ENCODE measurements at regions of chr17 and their contacts with region 1.

Region 1: GRCh38 chr17:59786536-59787319 is 79.3 kb downstream of the VMP1 start:
- DNase-seq: peak; percentile 21 to 96 (median 70)
- ATAC-seq: peak; percentile 89
- H3K4me3 ChIP-seq: peak overlapping the region; percentile 20 to 35
- H3K4me3 Mint-ChIP-seq: peak overlapping the region; percentile 78
- H3K27ac ChIP-seq: peak overlapping the region; percentile 43 to 83
- H3K27ac Mint-ChIP-seq: peak overlapping the region; percentile 94
- H3K4me1 ChIP-seq: peaks cover 35% of the 10 kb centered on the region
- H3K4me1 Mint-ChIP-seq: peaks cover 39% of the 10 kb centered on the region
- H3K27me3 ChIP-seq: no peaks in the 10 kb centered on the region
- H3K27me3 Mint-ChIP-seq: no peaks in the 10 kb centered on the region
- CTCF ChIP-seq: no peak

Region 2: DNA sequence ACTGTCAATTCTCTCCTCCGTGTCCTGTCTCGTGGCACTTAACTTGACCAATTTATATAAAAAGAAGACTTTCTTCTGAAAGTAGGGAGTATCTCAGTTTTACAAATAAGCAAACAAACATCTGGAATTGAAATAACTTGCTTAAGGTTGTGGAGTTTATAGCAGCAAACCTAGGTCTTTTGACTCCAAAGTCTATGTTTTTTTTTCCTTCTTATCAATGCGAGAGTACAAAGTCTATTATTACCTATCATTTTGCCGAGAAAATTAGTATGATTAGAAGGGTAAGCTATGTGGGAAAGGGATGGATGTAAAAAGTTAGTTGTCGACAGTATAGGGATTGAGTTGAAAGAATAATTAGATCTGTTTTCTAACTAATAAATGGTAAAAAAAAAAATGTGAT is 980.7 kb before region 1 on chr17:
- CTCF ChIA-PET with region 1: no interaction called
- POLR2A ChIA-PET with region 1: no interaction called
- intact Hi-C with region 1: no loop called
- DNase-seq: no peak
- ATAC-seq: no peak
- H3K4me3 ChIP-seq: no peak overlapping the region
- H3K4me3 Mint-ChIP-seq: no peak overlapping the region
- H3K27ac ChIP-seq: no peak overlapping the region
- H3K27ac Mint-ChIP-seq: no peak overlapping the region
- H3K4me1 ChIP-seq: no peaks in the 10 kb centered on the region
- H3K4me1 Mint-ChIP-seq: no peaks in the 10 kb centered on the region
- H3K27me3 ChIP-seq: no peaks in the 10 kb centered on the region
- H3K27me3 Mint-ChIP-seq: peaks cover 55% of the 10 kb centered on the region
- CTCF ChIP-seq: no peak

Region 3: DNA sequence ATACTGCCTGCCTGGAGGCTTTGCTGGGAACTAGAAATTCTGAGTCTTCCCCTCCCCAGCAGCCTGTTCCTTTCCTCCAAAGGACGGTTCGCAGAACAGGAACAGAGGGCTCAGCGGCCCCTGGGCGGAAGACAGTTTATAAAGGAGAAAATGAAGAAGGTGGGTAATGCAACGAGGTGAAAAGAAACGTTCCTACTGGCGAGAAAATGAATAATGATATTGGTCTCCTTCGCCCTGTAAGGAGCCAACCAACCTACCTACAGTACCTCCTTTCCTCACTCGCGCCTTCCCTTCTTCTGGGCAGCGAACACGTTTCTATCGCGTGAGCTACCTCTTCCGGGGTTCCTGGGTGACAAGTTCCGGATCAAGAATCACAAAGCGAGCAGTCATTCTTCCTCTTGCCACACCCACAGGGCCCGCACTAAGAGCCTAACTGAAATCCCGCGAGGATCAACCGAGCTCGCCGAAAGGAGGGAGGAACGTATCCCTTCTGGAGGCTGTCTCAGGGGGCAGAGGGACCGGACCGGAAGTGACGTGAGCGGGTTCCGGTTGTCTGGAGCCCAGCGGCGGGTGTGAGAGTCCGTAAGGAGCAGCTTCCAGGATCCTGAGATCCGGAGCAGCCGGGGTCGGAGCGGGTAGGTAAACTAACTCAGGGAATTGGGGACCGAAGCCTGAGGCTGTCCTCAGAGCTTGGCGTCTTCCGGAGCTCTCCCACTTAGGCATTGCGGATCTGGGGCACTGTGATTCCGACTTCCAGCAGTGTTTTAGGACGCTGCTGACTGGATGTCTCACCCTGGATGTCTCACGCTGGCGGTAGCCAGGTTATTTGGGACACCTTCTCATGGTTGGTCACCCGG is 79.4 kb before region 1 on chr17 and contains the starts of genes PTRH2 and VMP1:
- CTCF ChIA-PET with region 1: no interaction called
- POLR2A ChIA-PET with region 1: no interaction called
- intact Hi-C with region 1: no loop called
- DNase-seq: peak; percentile 72 to 97 (median 87)
- ATAC-seq: peak; percentile 93
- H3K4me3 ChIP-seq: peak within 1 kb of the TSS; percentile 72 to 80
- H3K4me3 Mint-ChIP-seq: peak within 1 kb of the TSS; percentile 95
- H3K27ac ChIP-seq: peak within 1 kb of the TSS; percentile 80 to 94
- H3K27ac Mint-ChIP-seq: peak within 1 kb of the TSS; percentile 97
- H3K4me1 ChIP-seq: peaks cover 36% of the 10 kb centered on the region
- H3K4me1 Mint-ChIP-seq: peaks cover 63% of the 10 kb centered on the region
- H3K27me3 ChIP-seq: no peaks in the 10 kb centered on the region
- H3K27me3 Mint-ChIP-seq: no peaks in the 10 kb centered on the region
- CTCF ChIP-seq: no peak
- total RNA-seq, gene PTRH2: 6.1 to 7.6 TPM
- total RNA-seq, gene VMP1: 56.8 to 66.2 TPM

Region 4: GRCh38 chr17:59725691-59726090 is 61.0 kb before region 1 on chr17:
- CTCF ChIA-PET with region 1: no interaction called
- POLR2A ChIA-PET with region 1: no interaction called
- intact Hi-C with region 1: no loop called
- DNase-seq: no peak
- ATAC-seq: no peak
- H3K4me3 ChIP-seq: no peak overlapping the region
- H3K4me3 Mint-ChIP-seq: no peak overlapping the region
- H3K27ac ChIP-seq: no peak overlapping the region
- H3K27ac Mint-ChIP-seq: no peak overlapping the region
- H3K4me1 ChIP-seq: no peaks in the 10 kb centered on the region
- H3K4me1 Mint-ChIP-seq: peaks cover 33% of the 10 kb centered on the region
- H3K27me3 ChIP-seq: no peaks in the 10 kb centered on the region
- H3K27me3 Mint-ChIP-seq: no peaks in the 10 kb centered on the region
- CTCF ChIP-seq: no peak

Region 5: DNA sequence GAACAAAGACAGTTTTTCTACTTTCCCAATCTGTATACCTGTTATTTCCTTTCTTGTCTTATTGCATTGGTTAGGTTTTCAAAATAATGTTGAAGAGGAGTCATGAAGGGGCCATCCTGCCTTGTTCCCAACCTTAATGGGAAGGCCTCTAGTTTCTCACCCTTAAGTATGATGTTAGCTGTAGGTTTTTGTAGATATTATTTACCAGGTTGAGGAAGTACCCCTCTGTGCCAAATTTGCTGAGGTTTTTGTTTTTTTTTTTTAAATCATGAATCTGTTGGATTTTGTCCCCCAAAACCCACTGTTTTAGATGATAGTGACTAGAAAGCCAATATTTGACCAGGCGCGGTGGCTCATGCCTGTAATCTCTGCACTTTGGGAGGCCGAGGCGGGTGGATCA is 42.9 kb before region 1 on chr17:
- CTCF ChIA-PET with region 1: no interaction called
- POLR2A ChIA-PET with region 1: no interaction called
- intact Hi-C with region 1: no loop called
- DNase-seq: no peak
- ATAC-seq: no peak
- H3K4me3 ChIP-seq: no peak overlapping the region
- H3K4me3 Mint-ChIP-seq: no peak overlapping the region
- H3K27ac ChIP-seq: no peak overlapping the region
- H3K27ac Mint-ChIP-seq: no peak overlapping the region
- H3K4me1 ChIP-seq: no peaks in the 10 kb centered on the region
- H3K4me1 Mint-ChIP-seq: peaks cover 2% of the 10 kb centered on the region
- H3K27me3 ChIP-seq: no peaks in the 10 kb centered on the region
- H3K27me3 Mint-ChIP-seq: no peaks in the 10 kb centered on the region
- CTCF ChIP-seq: no peak

Region 6: DNA sequence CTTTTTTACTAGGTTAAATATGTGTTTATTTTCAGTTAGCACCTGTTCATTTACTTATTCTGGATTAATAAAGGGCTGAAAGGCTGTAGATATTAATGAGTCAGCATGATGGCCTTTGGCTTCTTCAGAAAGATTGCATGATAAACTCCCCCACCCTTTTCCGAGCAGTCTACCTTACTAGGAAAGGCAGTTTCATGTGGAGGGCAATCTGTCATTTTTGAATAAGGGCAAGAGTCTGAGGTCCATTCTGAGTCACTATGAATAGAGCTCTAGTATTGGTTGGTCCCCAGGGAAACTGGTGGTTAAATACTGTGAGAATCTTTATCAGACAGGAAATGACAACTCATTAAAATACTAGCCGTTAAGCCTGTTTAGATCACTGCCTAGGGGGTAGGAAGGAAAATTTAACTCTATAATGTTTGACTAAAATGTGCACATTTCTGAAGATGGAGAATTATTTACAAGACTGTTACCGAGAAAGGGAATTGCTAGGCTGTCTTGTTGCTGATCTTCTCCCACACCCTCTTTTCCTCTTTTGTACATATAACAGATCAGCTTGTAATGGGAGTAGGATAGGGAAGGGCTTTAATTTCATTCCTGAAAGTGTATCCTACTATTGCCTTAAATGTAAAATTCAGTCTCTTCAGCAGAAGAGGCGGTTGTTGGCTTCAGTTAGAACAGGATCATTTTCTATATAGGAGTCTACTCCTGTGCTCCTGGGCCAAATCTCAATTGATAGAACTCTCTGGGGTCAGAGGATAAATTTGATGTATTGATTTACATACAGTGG is 42.7 kb after region 1 on chr17:
- CTCF ChIA-PET with region 1: no interaction called
- POLR2A ChIA-PET with region 1: no interaction called
- intact Hi-C with region 1: loop called in 1 of 2 experiments (anchors 1 kb)
- DNase-seq: peak in 3 of 9 experiments; percentile 11 to 87 (median 76)
- ATAC-seq: peak; percentile 85
- H3K4me3 ChIP-seq: peak overlapping the region in 1 of 2 experiments; percentile 23
- H3K4me3 Mint-ChIP-seq: peak overlapping the region; percentile 5
- H3K27ac ChIP-seq: peak overlapping the region in 1 of 2 experiments; percentile 70
- H3K27ac Mint-ChIP-seq: peak overlapping the region; percentile 79
- H3K4me1 ChIP-seq: peaks cover 18% of the 10 kb centered on the region
- H3K4me1 Mint-ChIP-seq: peaks cover 42% of the 10 kb centered on the region
- H3K27me3 ChIP-seq: no peaks in the 10 kb centered on the region
- H3K27me3 Mint-ChIP-seq: no peaks in the 10 kb centered on the region
- CTCF ChIP-seq: no peak

Region 7: DNA sequence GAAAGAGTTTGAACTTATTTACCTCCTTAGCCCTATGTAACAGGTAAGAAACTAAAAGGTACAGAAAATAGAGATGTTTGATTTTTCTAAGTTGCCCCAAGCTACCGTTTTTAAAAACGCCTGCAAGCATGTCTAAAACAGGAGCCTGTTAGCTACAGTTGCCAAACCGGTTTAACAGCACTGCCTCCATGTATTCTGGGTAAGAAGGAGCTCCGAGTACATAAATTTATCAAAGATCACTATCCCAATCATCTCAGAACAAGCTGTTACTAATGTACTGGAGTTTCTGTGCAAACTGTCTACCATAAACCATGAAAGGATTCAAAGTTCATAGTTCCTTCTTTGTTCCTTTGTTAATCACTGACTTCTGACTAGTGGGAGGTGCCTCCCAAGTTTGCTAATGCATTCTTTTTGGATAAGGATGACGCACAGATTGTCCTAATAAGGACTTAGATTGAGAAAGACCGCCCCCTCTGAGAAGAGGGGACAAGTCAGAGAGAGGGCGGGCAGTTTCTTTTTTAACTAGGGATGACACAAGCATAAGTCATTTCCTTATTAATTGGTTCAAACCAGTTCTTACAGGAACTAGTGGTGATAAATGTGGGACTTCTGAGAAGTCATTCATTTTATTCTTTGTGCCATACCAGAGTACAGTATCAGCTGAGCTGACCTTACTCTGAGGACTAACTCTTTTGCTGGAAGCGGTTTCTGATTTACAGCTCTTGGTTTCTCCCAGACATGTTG is 50.8 kb after region 1 on chr17:
- CTCF ChIA-PET with region 1: no interaction called
- POLR2A ChIA-PET with region 1: interaction called, 7 read pairs
- intact Hi-C with region 1: loop called (anchors 1 to 2 kb)
- DNase-seq: peak in 7 of 9 experiments; percentile 28 to 94 (median 57)
- ATAC-seq: peak; percentile 93
- H3K4me3 ChIP-seq: peak overlapping the region; percentile 14 to 64
- H3K4me3 Mint-ChIP-seq: peak overlapping the region; percentile 92
- H3K27ac ChIP-seq: peak overlapping the region; percentile 69 to 94
- H3K27ac Mint-ChIP-seq: peak overlapping the region; percentile 93
- H3K4me1 ChIP-seq: peaks cover 24% of the 10 kb centered on the region
- H3K4me1 Mint-ChIP-seq: peaks cover 48% of the 10 kb centered on the region
- H3K27me3 ChIP-seq: no peaks in the 10 kb centered on the region
- H3K27me3 Mint-ChIP-seq: no peaks in the 10 kb centered on the region
- CTCF ChIP-seq: no peak

Region 8: GRCh38 chr17:59859444-59860025 is 72.8 kb after region 1 on chr17:
- CTCF ChIA-PET with region 1: interaction called, 3 read pairs
- POLR2A ChIA-PET with region 1: no interaction called
- intact Hi-C with region 1: loop called in 1 of 2 experiments (anchors 1 kb)
- DNase-seq: peak in 2 of 9 experiments; percentile 54 to 64
- ATAC-seq: peak; percentile 61
- H3K4me3 ChIP-seq: no peak overlapping the region
- H3K4me3 Mint-ChIP-seq: no peak overlapping the region
- H3K27ac ChIP-seq: no peak overlapping the region
- H3K27ac Mint-ChIP-seq: no peak overlapping the region
- H3K4me1 ChIP-seq: no peaks in the 10 kb centered on the region
- H3K4me1 Mint-ChIP-seq: peaks cover 4% of the 10 kb centered on the region
- H3K27me3 ChIP-seq: no peaks in the 10 kb centered on the region
- H3K27me3 Mint-ChIP-seq: no peaks in the 10 kb centered on the region
- CTCF ChIP-seq: peak; percentile 65